Body of pancreas (tissue), 4 donors: ENCODE measurements at regions of chr11 and their contacts with region 1.

Region 1: DNA sequence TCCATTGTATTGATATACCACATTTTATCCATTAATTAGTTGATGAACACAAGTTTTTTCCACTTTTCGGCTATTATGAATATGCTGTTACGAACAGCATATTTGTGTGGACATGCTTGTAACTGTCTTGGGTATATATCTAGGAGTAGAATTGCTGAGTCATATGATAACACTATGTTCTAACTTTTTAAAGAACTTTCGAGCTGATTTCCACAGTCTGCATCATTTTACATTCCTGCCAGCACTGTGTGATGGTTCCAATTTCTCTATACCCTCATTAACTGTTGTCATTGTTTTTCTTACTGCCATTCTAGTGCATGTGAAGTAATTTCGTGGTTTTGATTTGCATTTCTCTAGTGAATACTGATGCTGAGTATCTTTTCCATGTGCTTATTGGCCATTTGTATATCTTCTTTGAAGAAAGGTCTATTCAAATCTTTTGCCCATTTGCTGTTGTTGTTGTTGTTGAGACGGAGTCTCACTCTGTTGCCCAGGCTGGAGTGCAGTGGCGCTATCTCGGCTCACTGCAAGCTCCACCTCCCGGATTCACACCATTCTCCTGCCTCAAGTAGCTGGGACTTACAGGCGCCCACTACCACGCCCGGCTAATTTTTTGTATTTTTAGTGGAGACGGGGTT is 7.4 kb upstream of the RCE1 start:
- DNase-seq: no peak
- ATAC-seq: no peak
- H3K4me3 ChIP-seq: no peak overlapping the region
- H3K27ac ChIP-seq: no peak overlapping the region
- H3K4me1 ChIP-seq: peaks cover 7% of the 10 kb centered on the region
- H3K27me3 ChIP-seq: no peaks in the 10 kb centered on the region
- CTCF ChIP-seq: no peak
- POLR2A ChIP-seq: no peak

Region 2: GRCh38 chr11:66344550-66345315 is 491.2 kb before region 1 on chr11 and contains the start of gene BRMS1:
- intact Hi-C with region 1: no loop called
- DNase-seq: peak; percentile 98 to 99 (median 98)
- ATAC-seq: peak; percentile 83
- H3K4me3 ChIP-seq: peak within 1 kb of the TSS; percentile 67 to 98
- H3K27ac ChIP-seq: peak within 1 kb of the TSS; percentile 62 to 98 (median 85)
- H3K4me1 ChIP-seq: peaks cover 52% of the 10 kb centered on the region
- H3K27me3 ChIP-seq: no peaks in the 10 kb centered on the region
- CTCF ChIP-seq: peak in 5 of 7 experiments; percentile 14 to 63 (median 54)
- POLR2A ChIP-seq: peak; percentile 63 to 94 (median 94)
- total RNA-seq, gene BRMS1: 19.4 to 23.1 TPM

Region 3: DNA sequence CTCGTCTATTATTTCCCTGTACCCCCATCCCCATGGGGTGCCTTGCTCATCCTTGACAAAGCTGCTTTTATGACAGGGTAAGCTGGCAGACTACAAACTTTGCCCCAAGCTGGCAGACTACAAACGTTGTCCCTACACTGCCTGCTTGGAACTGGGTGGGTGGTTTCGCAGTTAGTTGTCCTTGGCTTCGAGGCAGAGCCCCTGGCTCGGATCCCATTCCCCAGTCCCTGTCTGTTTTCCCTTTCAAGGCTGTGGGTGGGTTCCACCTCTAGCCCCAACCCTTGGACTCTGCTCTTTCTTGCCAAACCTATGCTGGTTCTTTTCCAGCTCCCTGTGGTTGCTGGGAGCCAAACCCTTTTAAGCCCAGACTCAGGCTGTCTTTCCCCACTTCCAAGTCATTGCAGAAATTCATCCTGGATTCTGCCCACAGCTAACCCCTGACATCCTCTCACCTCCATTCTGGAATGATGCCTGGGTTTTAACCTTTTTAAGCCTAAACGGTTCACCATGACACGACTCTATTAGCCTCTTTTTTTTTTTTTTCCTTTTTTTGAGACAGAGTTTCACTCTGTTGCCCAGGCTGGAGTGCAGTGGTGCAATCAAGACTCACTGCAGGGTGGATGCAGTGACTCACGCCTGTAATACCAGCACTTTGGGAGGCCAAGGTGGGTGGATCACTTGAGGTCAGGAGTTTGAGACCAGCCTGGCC is 228.6 kb before region 1 on chr11:
- intact Hi-C with region 1: no loop called
- DNase-seq: peak; percentile 73 to 87 (median 86)
- ATAC-seq: peak; percentile 88
- H3K4me3 ChIP-seq: no peak overlapping the region
- H3K27ac ChIP-seq: peak overlapping the region; percentile 22 to 67 (median 41)
- H3K4me1 ChIP-seq: peaks cover 16% of the 10 kb centered on the region
- H3K27me3 ChIP-seq: no peaks in the 10 kb centered on the region
- CTCF ChIP-seq: no peak
- POLR2A ChIP-seq: no peak

Region 4: DNA sequence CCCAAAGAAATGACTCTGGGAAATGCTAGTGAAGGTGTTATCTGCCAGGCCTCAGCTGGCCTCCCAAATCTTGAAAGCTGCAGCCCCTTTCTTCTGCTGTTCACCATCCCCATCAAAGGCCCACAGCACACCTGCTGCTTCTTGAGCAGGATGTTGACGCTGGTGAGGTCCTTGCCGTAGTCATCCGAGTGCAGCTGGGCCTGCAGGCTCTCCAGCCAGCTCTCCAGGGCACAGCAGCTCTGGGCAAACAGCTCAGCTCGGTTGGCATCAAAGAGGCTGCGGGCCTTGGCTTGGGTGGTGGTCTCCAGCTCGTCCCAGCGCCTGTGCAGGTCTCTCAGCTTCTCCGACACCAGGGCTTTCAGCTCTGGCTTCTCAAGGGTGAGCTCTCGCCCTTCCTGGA is 139.7 kb before region 1 on chr11:
- intact Hi-C with region 1: loop called (anchors 2 kb)
- DNase-seq: no peak
- ATAC-seq: no peak
- H3K4me3 ChIP-seq: no peak overlapping the region
- H3K27ac ChIP-seq: no peak overlapping the region
- H3K4me1 ChIP-seq: no peaks in the 10 kb centered on the region
- H3K27me3 ChIP-seq: no peaks in the 10 kb centered on the region
- CTCF ChIP-seq: no peak
- POLR2A ChIP-seq: no peak

Region 5: DNA sequence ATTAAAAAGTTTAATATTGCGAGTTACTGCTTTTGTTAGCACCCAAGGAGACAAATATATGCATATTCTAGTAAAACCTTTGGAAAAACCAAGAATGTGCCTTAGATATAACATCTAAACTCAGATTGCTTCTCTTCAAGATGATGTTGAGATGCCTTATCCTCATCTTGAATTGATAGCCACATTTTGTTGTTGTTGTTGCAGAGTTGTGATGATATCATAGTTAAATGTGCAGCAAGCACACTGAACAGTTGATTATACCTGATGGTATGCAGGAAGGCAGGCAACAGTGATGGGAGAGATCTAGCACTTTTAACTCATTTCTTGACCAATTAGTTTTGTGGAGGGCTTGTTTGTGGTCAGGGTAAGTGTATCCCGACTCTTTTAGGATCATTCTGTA is 331.2 kb after region 1 on chr11:
- intact Hi-C with region 1: no loop called
- DNase-seq: no peak
- ATAC-seq: no peak
- H3K4me3 ChIP-seq: no peak overlapping the region
- H3K27ac ChIP-seq: no peak overlapping the region
- H3K4me1 ChIP-seq: peaks cover 15% of the 10 kb centered on the region
- H3K27me3 ChIP-seq: no peaks in the 10 kb centered on the region
- CTCF ChIP-seq: no peak
- POLR2A ChIP-seq: no peak